ENCODE measurements at regions of chr9 and their contacts with region 1.

Region 1: GRCh38 chr9:127955294-127956035 is 17.8 kb upstream of the DPM2 start:
- DNase-seq: peak; percentile 85
- ATAC-seq: peak; percentile 96
- H3K4me3 Mint-ChIP-seq: no peak overlapping the region
- H3K27ac Mint-ChIP-seq: peak overlapping the region; percentile 8
- H3K4me1 Mint-ChIP-seq: peaks cover 54% of the 10 kb centered on the region
- H3K27me3 Mint-ChIP-seq: no peaks in the 10 kb centered on the region

Region 2: GRCh38 chr9:127770905-127771569 is 184.4 kb before region 1 on chr9:
- CTCF ChIA-PET with region 1: no interaction called
- DNase-seq: peak; percentile 98
- ATAC-seq: peak; percentile 91
- H3K4me3 Mint-ChIP-seq: peak overlapping the region; percentile 85
- H3K27ac Mint-ChIP-seq: peak overlapping the region; percentile 88
- H3K4me1 Mint-ChIP-seq: peaks cover 79% of the 10 kb centered on the region
- H3K27me3 Mint-ChIP-seq: no peaks in the 10 kb centered on the region

Region 3: DNA sequence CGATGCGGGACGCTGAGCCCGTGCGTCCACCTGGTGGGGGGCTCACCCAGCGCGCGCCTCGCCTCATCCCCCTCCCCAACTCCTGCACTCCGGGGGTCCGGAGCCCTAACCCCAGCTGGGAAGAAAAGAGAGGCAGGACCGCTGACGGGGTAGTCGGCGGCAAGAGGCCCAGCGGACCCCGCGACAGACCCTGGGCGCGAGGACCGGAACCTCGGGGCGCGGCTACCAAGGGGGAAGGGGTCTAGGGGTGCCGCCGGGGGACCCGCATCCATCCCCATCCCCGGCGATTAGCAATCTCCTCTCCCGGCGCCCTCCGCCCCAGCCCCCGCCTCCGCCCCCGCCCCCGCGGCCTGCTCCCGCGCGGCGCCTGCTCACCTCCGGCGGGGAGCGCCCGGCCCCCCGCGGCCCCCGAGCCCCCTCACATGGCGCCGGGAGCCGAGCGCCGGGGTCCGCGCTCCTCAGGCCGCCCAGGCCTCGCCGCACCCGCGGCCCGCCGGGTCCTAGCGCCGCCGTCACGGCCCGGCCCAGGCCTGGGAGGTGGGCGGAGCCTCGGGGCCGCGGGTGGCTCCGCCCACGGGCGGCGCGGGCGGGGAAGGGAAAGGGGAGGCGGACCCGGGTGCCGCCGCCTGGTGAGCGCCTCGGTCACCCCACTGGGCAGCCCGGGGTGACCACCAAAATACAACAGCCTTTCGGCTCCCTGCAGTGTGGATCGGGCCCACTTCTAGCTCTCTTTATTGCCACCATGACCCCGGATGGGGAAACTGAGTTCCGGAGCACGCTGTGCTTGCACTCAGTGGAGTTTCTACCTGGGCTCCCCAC is 56.1 kb before region 1 on chr9 and contains the start of gene ST6GALNAC6:
- CTCF ChIA-PET with region 1: no interaction called
- DNase-seq: peak; percentile 79
- ATAC-seq: peak; percentile 80
- H3K4me3 Mint-ChIP-seq: peak within 1 kb of the TSS; percentile 80
- H3K27ac Mint-ChIP-seq: peak within 1 kb of the TSS; percentile 78
- H3K4me1 Mint-ChIP-seq: peaks cover 40% of the 10 kb centered on the region
- H3K27me3 Mint-ChIP-seq: no peaks in the 10 kb centered on the region
- total RNA-seq, gene ST6GALNAC6: 75.7 to 93.5 TPM

Region 4: GRCh38 chr9:127970401-127971313 is 15.2 kb after region 1 on chr9:
- CTCF ChIA-PET with region 1: interaction called, 23 read pairs
- DNase-seq: peak; percentile 92
- ATAC-seq: peak; percentile 85
- H3K4me3 Mint-ChIP-seq: peak overlapping the region; percentile 68
- H3K27ac Mint-ChIP-seq: peak overlapping the region; percentile 90
- H3K4me1 Mint-ChIP-seq: peaks cover 89% of the 10 kb centered on the region
- H3K27me3 Mint-ChIP-seq: no peaks in the 10 kb centered on the region